Panc1 (cell line): ENCODE measurements at regions of chr19 and their contacts with region 1.

Region 1: DNA sequence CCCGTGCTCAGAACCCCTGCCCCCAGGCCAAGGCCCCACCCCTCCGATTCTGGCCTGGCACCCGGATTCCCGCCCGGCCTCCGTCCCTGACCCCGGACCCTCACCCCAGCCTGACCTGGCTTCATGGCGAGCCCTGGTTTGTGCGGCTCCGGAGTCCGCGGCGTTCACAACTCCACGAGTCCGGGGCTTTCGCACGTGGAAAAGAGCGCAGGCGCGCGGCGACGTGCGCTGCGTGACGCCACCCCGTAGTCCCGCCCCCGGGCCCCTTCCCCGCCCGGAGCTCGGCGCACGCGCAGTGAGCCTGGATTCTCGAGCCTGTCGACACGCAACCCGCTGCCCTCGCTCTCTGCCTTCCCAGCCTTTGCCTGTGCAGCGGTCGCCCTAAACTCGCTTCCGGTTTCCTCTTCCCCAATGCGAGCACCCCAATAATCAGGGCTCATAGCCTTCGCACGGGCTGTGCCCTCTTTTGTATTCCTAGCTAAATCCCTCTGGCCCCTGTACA is at the start of gene FBL:
- DNase-seq: peak; percentile 100
- ATAC-seq: peak; percentile 91
- H3K4me3 ChIP-seq: peak within 1 kb of the TSS; percentile 35 to 52
- H3K27ac ChIP-seq: peak within 1 kb of the TSS; percentile 83
- H3K4me1 ChIP-seq: peaks cover 60% of the 10 kb centered on the region
- H3K27me3 ChIP-seq: no peaks in the 10 kb centered on the region
- CTCF ChIP-seq: no peak
- total RNA-seq, gene FBL: 4,927 TPM

Region 2: DNA sequence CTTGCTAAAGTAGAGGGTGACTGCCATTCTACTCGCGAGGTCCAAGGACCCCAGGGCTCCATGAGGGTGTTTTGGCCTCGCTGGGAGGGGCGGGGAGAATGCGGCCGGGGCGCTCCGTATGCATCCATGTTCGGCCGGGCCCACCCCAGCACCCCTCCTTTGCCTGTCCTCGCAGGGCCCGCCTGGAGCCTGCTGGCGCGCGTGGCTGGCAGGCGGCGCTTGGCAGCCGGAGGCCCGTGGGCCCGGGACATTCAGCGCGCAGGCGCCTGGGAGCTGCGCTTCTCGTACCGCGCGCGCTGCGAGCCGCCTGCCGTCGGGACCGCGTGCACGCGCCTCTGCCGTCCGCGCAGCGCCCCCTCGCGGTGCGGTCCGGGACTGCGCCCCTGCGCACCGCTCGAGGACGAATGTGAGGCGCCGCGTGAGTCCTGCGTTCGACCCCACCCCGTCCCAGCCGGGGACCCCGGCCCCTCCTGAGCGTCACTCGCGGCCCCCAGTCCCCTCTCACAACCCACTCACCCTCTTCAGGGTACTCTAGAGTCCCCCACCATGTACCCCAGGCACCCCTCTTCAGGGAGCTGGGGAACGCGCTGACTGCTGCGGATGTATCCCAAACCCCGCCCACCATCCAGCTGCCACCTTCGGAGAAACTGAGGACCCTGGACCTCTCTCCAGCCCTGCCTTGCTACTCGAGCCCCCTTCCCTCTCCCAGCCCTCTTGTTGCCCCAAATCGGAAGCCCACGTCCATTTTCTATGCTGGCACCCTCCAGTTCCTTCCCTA is 343.4 kb before region 1 on chr19:
- CTCF ChIA-PET with region 1: interaction called, 3 read pairs
- POLR2A ChIA-PET with region 1: no interaction called
- in situ Hi-C with region 1: loop called (anchors 5 kb)
- intact Hi-C with region 1: no loop called
- DNase-seq: peak; percentile 93
- ATAC-seq: peak; percentile 24
- H3K4me3 ChIP-seq: peak overlapping the region in 1 of 2 experiments; percentile 34; a peak in 2 of 4 replicates
- H3K27ac ChIP-seq: peak overlapping the region; percentile 3; the same call in 1 of the 2 replicates
- H3K4me1 ChIP-seq: peaks cover 27% of the 10 kb centered on the region
- H3K27me3 ChIP-seq: peaks cover 8% of the 10 kb centered on the region
- CTCF ChIP-seq: no peak

Region 3: DNA sequence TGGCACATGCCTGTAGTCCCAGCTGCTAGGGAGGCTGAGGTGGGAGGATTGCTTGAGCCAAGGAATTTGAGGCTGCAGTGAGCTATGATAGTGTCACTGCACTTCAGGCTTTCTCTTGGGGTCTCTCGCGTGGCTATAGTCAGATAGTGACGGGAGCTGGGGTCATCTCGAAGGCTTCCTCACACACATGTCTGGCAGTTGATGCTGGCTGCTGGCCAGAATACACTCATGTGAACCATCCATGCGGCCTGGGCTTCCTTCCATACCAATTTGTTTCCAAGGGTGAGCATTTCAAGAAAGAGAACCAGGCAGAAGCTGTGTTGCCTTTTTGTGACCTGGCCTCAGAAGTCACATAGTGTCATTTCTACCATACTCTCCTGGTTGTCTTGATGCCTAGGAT is 41.1 kb before region 1 on chr19:
- CTCF ChIA-PET with region 1: interaction called, 61 read pairs
- POLR2A ChIA-PET with region 1: interaction called, 9 read pairs
- in situ Hi-C with region 1: no loop called
- intact Hi-C with region 1: no loop called
- DNase-seq: no peak
- ATAC-seq: no peak
- H3K4me3 ChIP-seq: no peak overlapping the region
- H3K27ac ChIP-seq: no peak overlapping the region
- H3K4me1 ChIP-seq: peaks cover 6% of the 10 kb centered on the region; the same call in 1 of the 2 replicates
- H3K27me3 ChIP-seq: peaks cover 29% of the 10 kb centered on the region
- CTCF ChIP-seq: no peak

Region 4: GRCh38 chr19:39858541-39858940 is 12.3 kb after region 1 on chr19:
- CTCF ChIA-PET with region 1: interaction called, 22 read pairs
- POLR2A ChIA-PET with region 1: interaction called, 16 read pairs
- in situ Hi-C with region 1: no loop called
- intact Hi-C with region 1: no loop called
- DNase-seq: no peak
- ATAC-seq: peak; percentile 13; the same call in 1 of the 2 replicates
- H3K4me3 ChIP-seq: no peak overlapping the region
- H3K27ac ChIP-seq: no peak overlapping the region
- H3K4me1 ChIP-seq: peaks cover 4% of the 10 kb centered on the region
- H3K27me3 ChIP-seq: no peaks in the 10 kb centered on the region
- CTCF ChIP-seq: no peak

Region 5: GRCh38 chr19:39970675-39971379 is 124.6 kb after region 1 on chr19 and contains the start of gene PSMC4:
- CTCF ChIA-PET with region 1: interaction called, 121 read pairs
- POLR2A ChIA-PET with region 1: interaction called, 48 read pairs
- in situ Hi-C with region 1: loop called (anchors 5 kb)
- intact Hi-C with region 1: loop called (anchors 2 kb)
- DNase-seq: peak; percentile 100
- ATAC-seq: peak; percentile 98
- H3K4me3 ChIP-seq: peak within 1 kb of the TSS; percentile 35 to 50
- H3K27ac ChIP-seq: peak within 1 kb of the TSS; percentile 82
- H3K4me1 ChIP-seq: peaks cover 17% of the 10 kb centered on the region
- H3K27me3 ChIP-seq: no peaks in the 10 kb centered on the region
- CTCF ChIP-seq: no peak
- total RNA-seq, gene PSMC4: 2,386 TPM

Region 6: DNA sequence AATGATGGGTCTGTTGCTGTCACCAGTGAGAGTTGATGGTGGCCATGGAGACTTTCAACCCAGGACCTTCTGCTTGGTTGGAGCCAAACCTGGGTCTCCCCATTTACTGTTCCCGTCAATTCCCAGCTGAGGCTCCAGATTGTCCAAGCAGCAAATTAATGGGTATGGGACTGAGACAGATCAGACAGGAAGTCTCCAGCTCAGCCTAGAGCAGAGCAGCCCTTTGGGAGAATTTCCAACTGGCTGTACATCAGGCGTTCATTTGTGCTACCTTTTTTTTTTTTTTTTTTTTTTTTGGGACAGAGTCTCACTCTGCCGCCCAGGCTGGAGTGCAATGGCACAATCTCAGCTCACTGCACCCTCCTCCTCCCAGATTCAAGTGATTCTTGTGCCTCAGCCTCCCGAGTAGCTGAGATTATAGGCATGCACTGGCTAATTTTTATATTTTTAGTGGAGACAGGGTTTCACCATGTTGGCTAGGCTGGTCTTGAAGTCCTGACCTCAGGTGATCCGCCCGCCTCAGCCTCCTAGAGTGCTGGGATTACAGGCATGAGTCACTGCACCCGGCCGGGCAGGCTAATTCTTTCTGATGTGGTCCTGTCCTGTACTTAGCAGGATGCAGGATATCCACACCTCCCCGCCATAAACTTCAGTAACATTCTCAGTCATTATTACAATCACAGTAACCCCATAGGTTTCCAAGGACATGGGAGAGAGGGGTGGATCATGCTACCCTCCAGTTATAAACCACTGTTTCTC is 354.3 kb after region 1 on chr19:
- CTCF ChIA-PET with region 1: no interaction called
- POLR2A ChIA-PET with region 1: interaction called, 12 read pairs
- in situ Hi-C with region 1: no loop called
- intact Hi-C with region 1: no loop called
- DNase-seq: no peak
- ATAC-seq: peak; percentile 7; the same call in 1 of the 2 replicates
- H3K4me3 ChIP-seq: no peak overlapping the region
- H3K27ac ChIP-seq: no peak overlapping the region
- H3K4me1 ChIP-seq: no peaks in the 10 kb centered on the region
- H3K27me3 ChIP-seq: no peaks in the 10 kb centered on the region
- CTCF ChIP-seq: no peak